ENCODE measurements at regions of chr12 and their contacts with region 1.

Region 1: GRCh38 chr12:88566171-88566829 is 14.0 kb downstream of the KITLG start:
- DNase-seq: no peak
- H3K4me3 ChIP-seq: no peak overlapping the region
- H3K4me1 ChIP-seq: peaks cover 44% of the 10 kb centered on the region
- H3K27me3 ChIP-seq: no peaks in the 10 kb centered on the region

Region 2: DNA sequence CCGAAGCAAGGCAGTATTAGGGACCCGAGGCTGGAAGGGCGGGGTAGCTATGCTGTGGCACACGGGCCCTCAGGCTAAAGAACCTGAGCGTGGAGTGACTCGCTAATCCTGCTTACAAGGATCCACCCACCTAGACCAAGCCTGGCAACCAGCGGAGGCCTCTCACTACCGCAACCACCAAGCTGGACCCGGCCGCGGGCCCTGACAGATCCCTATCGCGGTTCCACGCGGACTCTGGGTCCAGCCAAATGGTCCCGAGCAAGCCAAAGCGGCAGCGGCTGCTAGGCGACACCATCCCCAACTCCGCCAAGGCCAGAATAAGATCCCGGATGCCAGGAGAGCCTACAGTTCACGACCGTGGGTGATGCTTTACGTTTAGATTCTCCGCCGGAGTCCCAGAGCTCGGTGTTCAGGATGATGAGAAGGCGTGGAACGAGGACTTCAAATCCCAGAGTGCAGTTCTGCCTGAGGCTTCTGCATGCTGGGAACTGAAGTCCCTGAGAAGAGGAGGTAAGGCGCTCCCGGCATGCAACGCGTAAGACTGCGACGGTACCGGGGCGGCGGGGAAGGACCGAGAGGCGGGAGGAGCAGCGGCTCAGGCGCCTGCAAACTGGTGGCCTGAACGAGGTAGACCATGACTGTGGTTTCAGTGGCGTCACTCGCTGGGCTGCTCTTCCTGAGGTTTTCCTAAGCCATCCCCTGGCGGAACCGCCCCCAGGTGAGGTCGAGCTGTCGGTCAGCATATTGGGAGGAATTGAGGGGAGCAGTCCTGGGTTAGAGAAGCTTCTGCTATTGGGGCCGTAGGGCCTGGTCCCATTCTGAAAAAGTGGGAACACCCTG is 424.3 kb before region 1 on chr12 and contains the starts of genes CEP290 and TMTC3:
- in situ Hi-C with region 1: loop called (anchors 10 kb)
- DNase-seq: peak; percentile 94 to 97
- H3K4me3 ChIP-seq: peak within 1 kb of the TSS; percentile 80
- H3K4me1 ChIP-seq: peaks cover 28% of the 10 kb centered on the region
- H3K27me3 ChIP-seq: no peaks in the 10 kb centered on the region

Measured in HAP-1 (cell line).